ACHN (cell line): ENCODE measurements at regions of chr7 and their contacts with region 1.

Region 1: DNA sequence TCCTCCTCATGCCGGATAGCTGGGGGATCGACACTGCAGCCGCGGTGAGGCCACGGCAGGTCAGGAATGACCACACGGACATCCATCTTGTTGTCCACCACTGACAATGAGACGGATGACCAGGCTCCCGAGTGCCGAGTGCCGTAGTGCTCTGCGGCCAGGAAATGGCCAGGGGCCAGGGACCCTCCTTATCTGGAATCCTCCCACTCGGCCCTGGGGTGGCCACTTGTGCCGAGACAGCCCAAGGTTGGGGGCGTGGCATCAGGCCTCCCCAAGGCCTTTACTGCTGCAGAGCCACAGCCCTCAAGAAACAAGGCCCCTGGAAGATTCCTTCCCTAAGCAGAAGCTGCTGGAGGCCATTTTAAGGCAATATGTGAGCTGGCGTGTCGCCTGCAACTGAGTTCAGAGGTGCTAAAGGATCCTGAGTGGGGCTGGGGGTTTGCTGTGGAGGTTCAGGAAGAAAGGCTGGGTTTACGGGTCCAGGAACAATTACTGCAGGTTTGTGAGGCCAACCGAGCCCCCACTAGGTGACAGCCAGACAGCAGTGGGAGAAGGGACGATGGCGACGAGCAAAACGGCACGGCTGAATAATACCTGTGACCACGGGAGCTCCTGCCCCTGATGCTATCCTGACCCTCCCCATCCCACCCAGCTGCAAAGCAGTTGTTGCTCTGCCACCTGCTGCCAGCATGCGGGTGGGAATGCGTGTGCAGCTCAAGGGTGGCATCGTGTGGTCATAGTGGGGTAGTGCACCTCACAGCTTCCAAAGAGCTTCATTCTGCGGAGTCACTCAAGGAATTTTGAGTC is 31.6 kb upstream of the LEP start:
- DNase-seq: peak; percentile 83

Region 2: DNA sequence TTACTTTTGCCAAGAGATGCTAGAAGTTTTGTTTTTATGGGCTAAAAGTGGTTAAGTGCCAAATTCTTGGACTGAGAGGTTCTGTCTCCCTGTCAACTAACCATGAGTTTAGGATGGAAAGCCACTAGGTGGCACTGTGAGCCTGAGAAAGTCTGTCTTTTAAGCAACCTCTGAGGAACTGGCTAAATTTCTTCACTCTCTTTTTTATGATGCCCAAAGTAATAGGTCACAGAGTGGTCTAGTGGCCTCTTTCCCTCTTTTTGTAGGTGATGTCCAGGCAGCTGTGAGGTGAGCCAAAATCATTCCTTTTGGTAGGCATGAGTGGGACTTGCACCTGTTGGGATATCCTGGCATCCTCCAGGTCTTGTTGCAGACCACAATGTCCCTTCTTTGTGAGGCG is 500.6 kb before region 1 on chr7:
- in situ Hi-C with region 1: loop called (anchors 25 kb)
- DNase-seq: peak; percentile 90

Region 3: GRCh38 chr7:128041203-128041602 is 168.2 kb before region 1 on chr7:
- in situ Hi-C with region 1: loop called (anchors 10 kb)
- DNase-seq: peak; percentile 85

Region 4: DNA sequence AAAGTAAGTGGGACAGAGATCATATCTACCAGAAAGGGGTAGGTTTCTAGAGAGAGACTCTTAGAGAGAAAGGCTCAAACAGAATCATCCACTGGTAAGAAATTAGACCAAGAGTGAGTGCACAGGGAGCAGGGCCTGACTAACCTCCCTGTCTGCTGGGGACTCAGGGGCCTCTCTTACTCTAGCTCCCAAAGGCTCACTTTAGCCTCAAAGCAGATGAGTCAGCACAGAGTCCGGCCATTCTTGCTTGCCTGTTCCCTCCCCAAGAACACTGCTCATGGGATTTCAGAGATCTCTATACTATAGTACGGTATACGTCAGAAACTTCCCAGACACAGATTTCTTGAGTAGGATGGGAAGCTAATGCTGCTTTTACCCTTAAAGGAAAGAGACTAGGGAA is 101.6 kb after region 1 on chr7:
- in situ Hi-C with region 1: no loop called
- DNase-seq: no peak

Region 5: GRCh38 chr7:128783143-128783861 is 573.9 kb after region 1 on chr7:
- in situ Hi-C with region 1: no loop called
- DNase-seq: no peak